HepG2 (cell line): ENCODE measurements at regions of chr2 and their contacts with region 1.

Region 1: GRCh38 chr2:43611987-43612894 is 16.4 kb upstream of the THADA start:
- DNase-seq: peak; percentile 73
- ATAC-seq: peak; percentile 87
- H3K4me3 ChIP-seq: peak overlapping the region; percentile 24 to 59 (median 43); a peak in 5 of 6 replicates
- H3K27ac ChIP-seq: peak overlapping the region; percentile 21
- H3K4me1 ChIP-seq: peaks cover 48% of the 10 kb centered on the region
- H3K27me3 ChIP-seq: 0 out of 5 replicates have a peak, but pooled peaks cover 0 to 2% of the 10 kb centered on the region in 2 experiments
- CTCF ChIP-seq: peak; percentile 93
- EP300 ChIP-seq: no peak
- POLR2A ChIP-seq: no peak
- RAD21 ChIP-seq: peak; percentile 73

Region 2: DNA sequence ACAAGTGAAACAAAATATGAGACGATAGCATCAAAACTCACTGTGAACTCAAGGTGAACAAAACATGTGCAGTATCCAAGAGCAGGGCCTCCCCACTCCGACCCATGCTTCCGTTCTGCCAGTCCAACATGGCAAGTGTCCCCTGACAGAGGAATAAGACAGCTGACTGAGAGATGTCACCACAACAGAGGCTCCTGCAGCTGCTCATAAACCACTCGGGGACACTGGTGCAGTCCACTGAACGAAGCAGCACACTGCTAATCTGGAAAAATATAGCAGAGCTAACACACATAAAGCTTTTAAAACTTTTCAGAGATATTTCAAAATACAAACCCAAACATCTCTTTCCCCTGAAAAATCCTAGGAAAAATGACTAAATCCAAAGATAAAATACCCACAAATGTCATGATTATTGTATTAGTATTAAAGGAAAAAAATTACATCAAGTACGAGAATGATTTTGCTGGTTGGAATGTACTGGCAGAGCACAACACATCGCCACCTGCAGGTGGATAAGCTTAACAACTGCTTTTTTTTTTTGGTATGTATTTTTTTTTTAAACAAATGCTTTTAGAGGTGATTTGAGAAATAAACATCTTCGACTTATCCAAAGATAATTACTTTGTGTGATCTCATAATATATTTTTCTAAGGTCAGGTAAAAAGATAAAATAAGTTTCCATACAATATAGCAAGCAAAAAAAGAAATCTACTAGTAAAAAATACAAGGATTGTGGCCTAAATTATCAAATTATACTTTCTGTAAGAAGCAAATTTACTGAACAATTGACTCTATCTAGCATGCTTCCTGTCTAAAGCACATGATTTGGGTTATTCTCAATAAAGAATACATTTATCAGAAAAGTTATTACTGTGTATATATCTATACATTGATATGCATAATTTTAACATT is 35.0 kb before region 1 on chr2:
- CTCF ChIA-PET with region 1: no interaction called
- POLR2A ChIA-PET with region 1: no interaction called
- in situ Hi-C with region 1: no loop called
- intact Hi-C with region 1: no loop called
- DNase-seq: peak; percentile 63
- ATAC-seq: 0 out of 3 replicates have a peak, but pooled peaks have one; percentile 33
- H3K4me3 ChIP-seq: no peak overlapping the region
- H3K27ac ChIP-seq: no peak overlapping the region
- H3K4me1 ChIP-seq: no peaks in the 10 kb centered on the region
- H3K27me3 ChIP-seq: no peaks in the 10 kb centered on the region
- CTCF ChIP-seq: peak; percentile 68
- EP300 ChIP-seq: no peak
- POLR2A ChIP-seq: no peak
- RAD21 ChIP-seq: 0 out of 2 replicates have a peak, but pooled peaks have one; percentile 14

Region 3: GRCh38 chr2:43637030-43637803 is 25.0 kb after region 1 on chr2 and contains the start of gene PLEKHH2:
- CTCF ChIA-PET with region 1: no interaction called
- POLR2A ChIA-PET with region 1: interaction called, 3 read pairs
- in situ Hi-C with region 1: no loop called
- intact Hi-C with region 1: loop called (anchors 1 kb)
- DNase-seq: peak; percentile 77
- ATAC-seq: peak; percentile 98
- H3K4me3 ChIP-seq: peak within 1 kb of the TSS; percentile 77 to 87 (median 86)
- H3K27ac ChIP-seq: no peak within 1 kb of the TSS
- H3K4me1 ChIP-seq: peaks cover 51% of the 10 kb centered on the region
- H3K27me3 ChIP-seq: peaks cover 0 to 28% of the 10 kb centered on the region in 2 experiments; a peak in 3 of 5 replicates
- CTCF ChIP-seq: peak; percentile 18; the same call in 1 of the 2 replicates
- EP300 ChIP-seq: no peak
- POLR2A ChIP-seq: no peak
- RAD21 ChIP-seq: no peak
- total RNA-seq, gene PLEKHH2: 0.52 and 1.1 TPM in 2 replicates

Region 4: DNA sequence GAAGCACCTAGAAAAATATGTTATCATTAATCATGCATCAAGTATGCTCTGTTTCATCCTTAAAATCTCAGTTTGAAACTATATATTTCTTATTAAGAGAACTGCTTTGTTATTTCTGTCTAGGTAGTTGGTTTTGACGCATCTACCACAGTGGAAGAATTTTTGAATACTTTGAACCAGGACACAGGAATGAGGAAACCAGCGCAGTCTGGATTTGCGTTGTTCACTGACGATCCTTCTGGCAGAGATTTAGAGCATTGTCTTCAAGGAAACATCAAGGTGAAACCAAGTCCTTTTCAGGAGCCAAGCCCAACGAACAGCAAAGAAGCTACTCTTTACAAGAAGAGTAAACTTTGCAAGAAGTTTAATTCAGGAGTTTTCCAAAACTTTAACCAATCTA is 131.5 kb after region 1 on chr2:
- CTCF ChIA-PET with region 1: no interaction called
- POLR2A ChIA-PET with region 1: no interaction called
- in situ Hi-C with region 1: no loop called
- intact Hi-C with region 1: loop called (anchors 1 kb)
- DNase-seq: no peak
- ATAC-seq: no peak
- H3K4me3 ChIP-seq: no peak overlapping the region
- H3K27ac ChIP-seq: peak overlapping the region; percentile 47
- H3K4me1 ChIP-seq: peaks cover 36% of the 10 kb centered on the region
- H3K27me3 ChIP-seq: no peaks in the 10 kb centered on the region
- CTCF ChIP-seq: no peak
- EP300 ChIP-seq: no peak
- POLR2A ChIP-seq: no peak
- RAD21 ChIP-seq: no peak

Region 5: DNA sequence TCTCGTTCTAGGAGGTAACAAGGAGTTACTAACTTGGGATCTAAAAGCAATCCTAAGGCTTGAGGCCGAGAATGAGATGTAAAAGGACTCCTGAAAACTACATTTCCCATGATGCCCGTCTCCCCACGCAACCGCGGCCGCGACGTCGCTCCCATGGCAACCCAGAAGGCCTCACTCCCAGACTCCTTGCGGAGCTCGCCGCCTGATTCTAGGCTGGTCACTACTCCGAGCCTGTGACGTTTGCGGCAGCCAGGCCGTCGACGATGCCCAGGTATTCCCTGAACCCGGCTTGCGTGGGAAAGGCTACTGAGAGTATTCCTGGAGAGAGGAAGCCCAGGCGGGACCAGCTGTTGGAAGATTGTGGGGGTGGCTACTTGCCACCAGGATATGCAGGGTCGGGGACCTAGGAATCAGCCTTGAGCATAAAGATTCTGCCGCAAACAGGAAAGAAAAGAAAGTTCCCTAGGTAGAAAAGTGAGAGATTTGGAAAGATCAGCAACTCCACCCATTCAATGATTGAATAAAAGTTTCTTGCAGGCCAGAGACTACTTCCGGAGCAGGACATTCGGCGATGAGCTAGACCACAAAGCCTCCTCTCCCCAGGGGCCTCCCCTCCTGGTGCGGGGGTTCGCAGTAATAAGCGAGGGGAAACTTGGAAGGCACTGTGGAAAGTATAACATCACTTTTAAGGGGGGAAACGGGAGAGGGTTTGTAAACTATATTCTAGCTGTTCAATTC is 161.8 kb after region 1 on chr2 and contains the start of gene DYNC2LI1:
- CTCF ChIA-PET with region 1: no interaction called
- POLR2A ChIA-PET with region 1: no interaction called
- in situ Hi-C with region 1: no loop called
- intact Hi-C with region 1: loop called (anchors 5 kb)
- DNase-seq: peak; percentile 83
- ATAC-seq: peak; percentile 99
- H3K4me3 ChIP-seq: peak within 1 kb of the TSS; percentile 86 to 94 (median 89)
- H3K27ac ChIP-seq: peak within 1 kb of the TSS; percentile 16
- H3K4me1 ChIP-seq: peaks cover 11% of the 10 kb centered on the region
- H3K27me3 ChIP-seq: no peaks in the 10 kb centered on the region; a peak in 1 of 5 replicates
- CTCF ChIP-seq: no peak
- EP300 ChIP-seq: no peak
- POLR2A ChIP-seq: peak; percentile 35 to 66; a peak in 3 of 4 replicates
- RAD21 ChIP-seq: no peak
- total RNA-seq, gene DYNC2LI1: 23.2 and 27.9 TPM in 2 replicates

Region 6: DNA sequence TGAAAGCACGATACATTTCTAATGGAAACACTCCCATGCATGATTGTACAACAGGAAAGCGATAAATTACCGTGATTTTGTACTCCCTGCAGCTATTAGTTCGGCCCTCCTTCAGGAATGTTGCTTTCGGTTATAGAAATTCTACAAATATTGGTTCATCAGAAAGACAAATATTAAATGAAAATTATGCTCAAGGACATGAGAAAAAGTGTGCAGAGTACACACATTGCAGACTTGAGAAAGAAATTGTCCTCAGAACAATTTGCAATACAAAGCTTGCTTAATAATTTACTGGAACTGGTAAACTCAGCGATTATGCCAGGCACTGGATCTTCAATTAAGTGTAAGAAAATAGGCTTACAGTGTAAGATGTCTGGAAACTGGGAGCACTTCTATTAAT is 272.4 kb after region 1 on chr2:
- CTCF ChIA-PET with region 1: no interaction called
- POLR2A ChIA-PET with region 1: no interaction called
- in situ Hi-C with region 1: no loop called
- intact Hi-C with region 1: loop called (anchors 1 kb)
- DNase-seq: peak; percentile 69
- ATAC-seq: no peak; the same call in 2 of the 3 replicates
- H3K4me3 ChIP-seq: no peak overlapping the region
- H3K27ac ChIP-seq: peak overlapping the region; percentile 18
- H3K4me1 ChIP-seq: peaks cover 54% of the 10 kb centered on the region
- H3K27me3 ChIP-seq: no peaks in the 10 kb centered on the region
- CTCF ChIP-seq: no peak
- EP300 ChIP-seq: no peak; a peak in 1 of 4 replicates
- POLR2A ChIP-seq: no peak
- RAD21 ChIP-seq: no peak